IMR-90 (cell line): ENCODE measurements at regions of chr18 and their contacts with region 1.

Region 1: GRCh38 chr18:79740521-79741361 is 57.0 kb upstream of the KCNG2 start:
- DNase-seq: no peak
- ATAC-seq: no peak
- H3K4me3 ChIP-seq: no peak overlapping the region
- H3K27ac ChIP-seq: no peak overlapping the region
- H3K4me1 ChIP-seq: no peaks in the 10 kb centered on the region
- H3K27me3 ChIP-seq: no peaks in the 10 kb centered on the region
- CTCF ChIP-seq: no peak
- POLR2A ChIP-seq: no peak
- RAD21 ChIP-seq: no peak

Region 2: DNA sequence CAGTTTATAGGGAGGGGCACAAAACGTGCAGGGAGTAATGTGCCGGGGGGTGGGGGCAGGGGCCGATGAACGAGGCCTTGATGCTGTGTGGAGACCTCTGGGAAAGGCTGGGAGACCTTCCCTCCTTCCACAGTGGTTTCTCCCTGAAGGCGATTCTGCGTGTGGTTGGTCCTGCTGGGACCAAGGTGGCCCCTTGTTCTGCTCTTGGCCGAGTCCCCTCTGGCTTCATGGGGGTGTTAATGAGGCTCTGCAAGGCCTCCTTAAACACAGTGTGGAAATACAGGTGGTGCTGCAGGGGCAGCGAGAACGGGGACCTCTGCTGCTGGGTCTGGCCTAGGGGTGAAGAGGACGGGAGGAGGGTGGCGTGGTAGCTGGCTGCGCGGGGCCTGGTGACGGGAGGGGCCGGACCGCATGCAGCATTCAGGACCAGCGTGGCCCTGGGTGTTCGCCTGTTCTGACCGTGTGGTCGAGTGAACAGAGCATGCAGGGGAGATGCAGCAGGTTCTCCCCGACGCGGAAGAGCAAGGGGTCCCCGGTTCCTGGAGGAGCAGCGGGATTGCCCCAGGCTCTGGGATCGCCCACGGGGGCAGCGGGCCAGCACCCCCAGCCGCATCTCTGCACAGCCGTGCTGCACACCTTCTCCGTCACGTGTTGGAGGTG is 14.9 kb after region 1 on chr18:
- CTCF ChIA-PET with region 1: no interaction called
- POLR2A ChIA-PET with region 1: no interaction called
- dilution Hi-C with region 1: no loop called
- in situ Hi-C with region 1: no loop called
- intact Hi-C with region 1: loop called (anchors 2 kb)
- DNase-seq: no peak
- ATAC-seq: no peak
- H3K4me3 ChIP-seq: no peak overlapping the region
- H3K27ac ChIP-seq: no peak overlapping the region
- H3K4me1 ChIP-seq: no peaks in the 10 kb centered on the region
- H3K27me3 ChIP-seq: no peaks in the 10 kb centered on the region
- CTCF ChIP-seq: no peak
- POLR2A ChIP-seq: no peak
- RAD21 ChIP-seq: no peak